Dorsolateral prefrontal cortex (tissue), 120 donors: ENCODE measurements at regions of chr2 and their contacts with region 1.

Region 1: GRCh38 chr2:149330126-149331022 is at the start of gene LYPD6:
- DNase-seq: peak in 9 of 10 donors; percentile 36 to 86 (median 59)
- H3K4me3 ChIP-seq: peak within 1 kb of the TSS; percentile 61 to 89 (median 76)
- H3K27ac ChIP-seq: peak within 1 kb of the TSS in 32 of 59 donors; percentile 9 to 79 (median 47)
- H3K27me3 ChIP-seq: peaks cover 0 to 21% (median 0%) of the 10 kb centered on the region in 45 donors
- CTCF ChIP-seq: peak in 5 of 56 donors; percentile 1 to 20 (median 15)
- total RNA-seq, gene LYPD6: 3.0 to 20.3 (median 7.9) TPM

Region 2: DNA sequence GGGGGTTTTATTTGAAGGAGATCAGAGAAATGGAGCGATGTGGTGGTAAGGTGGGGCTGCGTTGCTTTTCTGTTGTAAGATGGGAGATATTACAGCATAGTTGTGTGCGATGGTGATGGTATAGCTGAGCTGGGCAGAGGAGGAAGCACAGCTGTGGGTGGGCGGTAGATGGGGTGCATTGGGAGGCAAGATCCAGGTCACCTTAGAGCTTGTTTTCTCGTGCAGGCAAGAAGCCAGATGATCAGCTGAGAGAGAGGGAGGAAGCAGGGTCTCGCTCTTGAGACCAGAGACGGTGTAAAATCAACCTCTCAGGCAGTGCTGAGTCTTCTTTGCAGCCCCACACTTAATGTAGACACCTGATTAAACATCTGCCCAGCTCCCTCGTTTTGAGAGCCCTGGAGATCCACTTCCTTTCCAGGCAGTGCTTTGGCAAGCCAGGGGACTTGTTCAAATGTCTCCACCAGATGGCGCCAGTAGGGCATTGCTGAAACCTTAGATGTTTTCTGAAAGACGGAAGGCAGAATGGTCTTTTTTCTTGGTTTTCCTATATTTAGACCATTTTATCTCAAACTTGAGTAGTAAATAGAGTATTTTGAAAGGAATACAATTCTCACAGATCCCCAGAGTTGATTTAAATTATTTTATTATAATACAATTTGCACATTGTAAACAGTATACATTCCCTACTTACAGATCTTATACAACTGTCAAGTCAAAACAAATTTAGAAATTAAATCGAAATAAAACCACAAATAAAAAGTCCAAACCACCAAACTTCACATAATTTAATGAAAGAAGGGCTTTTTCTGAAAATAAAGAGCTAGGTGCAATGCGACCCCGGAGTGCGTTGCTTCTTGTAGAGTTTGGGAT is 313.0 kb before region 1 on chr2:
- intact Hi-C with region 1: loop called in 1 of 2 experiments (anchors 10 kb)
- DNase-seq: peak; percentile 61 to 91 (median 84)
- H3K4me3 ChIP-seq: peak overlapping the region in 1 of 59 donors; percentile 29
- H3K27ac ChIP-seq: peak overlapping the region in 36 of 59 donors; percentile 1 to 77 (median 26)
- H3K27me3 ChIP-seq: no peaks in the 10 kb centered on the region
- CTCF ChIP-seq: peak; percentile 78 to 98 (median 94)

Region 3: GRCh38 chr2:149064856-149065630 is 265.3 kb before region 1 on chr2:
- intact Hi-C with region 1: no loop called
- DNase-seq: no peak
- H3K4me3 ChIP-seq: no peak overlapping the region
- H3K27ac ChIP-seq: no peak overlapping the region
- H3K27me3 ChIP-seq: peaks cover 0 to 4% (median 0%) of the 10 kb centered on the region in 45 donors
- CTCF ChIP-seq: no peak

Region 4: GRCh38 chr2:149488706-149489440 is 158.5 kb after region 1 on chr2:
- intact Hi-C with region 1: loop called in 1 of 2 experiments (anchors 2 kb)
- DNase-seq: no peak
- H3K4me3 ChIP-seq: peak overlapping the region in 24 of 59 donors; percentile 2 to 38 (median 18)
- H3K27ac ChIP-seq: peak overlapping the region in 30 of 59 donors; percentile 5 to 79 (median 46)
- H3K27me3 ChIP-seq: peaks cover 0 to 31% (median 0%) of the 10 kb centered on the region in 45 donors
- CTCF ChIP-seq: no peak

Region 5: GRCh38 chr2:149561309-149561926 is 231.0 kb after region 1 on chr2:
- intact Hi-C with region 1: loop called in 1 of 2 experiments (anchors 10 kb)
- DNase-seq: no peak
- H3K4me3 ChIP-seq: no peak overlapping the region
- H3K27ac ChIP-seq: no peak overlapping the region
- H3K27me3 ChIP-seq: no peaks in the 10 kb centered on the region
- CTCF ChIP-seq: peak; percentile 78 to 99 (median 93)